ENCODE measurements at regions of chr15 and their contacts with region 1.

Region 1: GRCh38 chr15:66714543-66714981 is 12.5 kb downstream of the SMAD6 start:
- DNase-seq: no peak
- H3K4me3 ChIP-seq: no peak overlapping the region
- H3K27ac ChIP-seq: no peak overlapping the region
- H3K4me1 ChIP-seq: peaks cover 13% of the 10 kb centered on the region
- H3K27me3 ChIP-seq: no peaks in the 10 kb centered on the region
- CTCF ChIP-seq: no peak

Region 2: DNA sequence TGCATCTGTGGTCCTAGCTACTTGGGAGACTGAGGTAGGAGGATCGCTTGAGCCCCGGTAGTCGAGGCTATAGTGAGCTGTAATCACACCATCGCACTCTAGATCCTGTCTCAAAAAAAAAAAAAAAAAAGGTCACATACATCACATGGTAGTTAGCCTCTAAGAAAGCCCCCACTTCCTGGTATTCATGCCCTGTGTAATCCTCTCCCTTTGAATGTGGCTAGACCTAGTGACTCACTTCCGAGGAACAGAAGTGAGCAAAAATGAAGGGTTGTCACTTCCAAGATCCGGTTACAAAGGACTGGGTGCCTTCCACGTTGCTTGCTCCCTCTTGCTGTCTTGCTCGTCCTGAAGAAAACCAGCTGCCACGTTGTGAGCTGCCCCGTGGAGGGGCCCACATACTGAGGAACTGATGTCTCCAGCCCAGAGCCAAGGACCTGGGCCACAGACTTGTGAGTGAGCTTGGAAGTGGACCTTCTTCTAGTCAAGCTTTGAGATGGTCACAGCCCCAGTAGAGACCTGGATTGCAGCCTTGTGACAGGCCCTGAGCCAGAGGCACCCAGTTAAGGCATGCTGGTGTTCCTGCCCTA is 136.2 kb before region 1 on chr15:
- CTCF ChIA-PET with region 1: interaction called, 12 read pairs
- POLR2A ChIA-PET with region 1: no interaction called
- intact Hi-C with region 1: no loop called
- DNase-seq: peak; percentile 9 to 46
- H3K4me3 ChIP-seq: no peak overlapping the region
- H3K27ac ChIP-seq: no peak overlapping the region
- H3K4me1 ChIP-seq: no peaks in the 10 kb centered on the region
- H3K27me3 ChIP-seq: no peaks in the 10 kb centered on the region
- CTCF ChIP-seq: no peak

Region 3: DNA sequence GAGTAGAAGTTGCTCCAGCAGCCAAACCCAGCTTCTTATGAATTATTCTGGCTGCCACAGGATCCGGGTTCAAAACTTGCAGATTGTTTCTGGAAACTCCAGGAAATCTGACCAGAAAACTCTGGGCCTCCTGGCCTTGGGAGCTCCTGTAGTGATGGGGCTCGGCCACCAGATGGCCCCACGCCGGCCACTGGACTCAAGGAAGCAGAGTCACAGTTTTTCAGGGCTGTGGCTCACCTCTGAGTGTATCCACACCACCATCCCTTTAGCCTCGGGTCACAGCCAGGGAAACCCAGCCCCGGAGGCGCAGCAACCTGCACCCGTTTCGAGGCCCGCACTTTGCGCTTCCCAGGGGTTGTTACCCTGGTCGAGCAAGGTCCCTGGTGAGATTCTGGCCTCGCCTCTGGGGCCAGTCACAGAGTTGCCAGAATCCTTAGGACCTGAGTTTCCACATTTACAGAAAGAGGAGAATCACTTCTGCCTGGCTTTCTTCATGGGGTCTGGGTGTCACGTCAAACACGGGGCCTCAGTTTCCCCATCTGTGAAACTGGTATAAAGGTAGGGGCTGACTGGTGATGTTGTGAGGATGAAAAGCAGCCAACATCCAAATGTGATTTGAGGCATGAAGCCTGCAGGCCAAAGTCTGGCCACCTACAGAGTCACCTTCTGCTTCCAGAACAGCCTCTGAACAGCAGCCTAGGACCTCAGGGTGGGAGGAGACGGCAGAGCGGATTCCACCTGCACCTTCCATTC is 95.2 kb before region 1 on chr15:
- CTCF ChIA-PET with region 1: no interaction called
- POLR2A ChIA-PET with region 1: interaction called, 19 read pairs
- intact Hi-C with region 1: no loop called
- DNase-seq: peak; percentile 65 to 82
- H3K4me3 ChIP-seq: no peak overlapping the region
- H3K27ac ChIP-seq: no peak overlapping the region
- H3K4me1 ChIP-seq: peaks cover 4% of the 10 kb centered on the region; the same call in 1 of the 2 replicates
- H3K27me3 ChIP-seq: no peaks in the 10 kb centered on the region
- CTCF ChIP-seq: peak; percentile 80

Region 4: GRCh38 chr15:67157531-67158252 is 443.1 kb after region 1 on chr15:
- CTCF ChIA-PET with region 1: no interaction called
- POLR2A ChIA-PET with region 1: no interaction called
- intact Hi-C with region 1: no loop called
- DNase-seq: no peak
- H3K4me3 ChIP-seq: no peak overlapping the region
- H3K27ac ChIP-seq: peak overlapping the region; percentile 16; the same call in 1 of the 2 replicates
- H3K4me1 ChIP-seq: peaks cover 36% of the 10 kb centered on the region
- H3K27me3 ChIP-seq: no peaks in the 10 kb centered on the region
- CTCF ChIP-seq: no peak

Measured in PC-9 (cell line).